HEK293T (cell line): ENCODE measurements at regions of chr10 and their contacts with region 1.

Region 1: GRCh38 chr10:72354478-72355213 is at the start of gene DNAJB12:
- DNase-seq: peak; percentile 94

Region 2: DNA sequence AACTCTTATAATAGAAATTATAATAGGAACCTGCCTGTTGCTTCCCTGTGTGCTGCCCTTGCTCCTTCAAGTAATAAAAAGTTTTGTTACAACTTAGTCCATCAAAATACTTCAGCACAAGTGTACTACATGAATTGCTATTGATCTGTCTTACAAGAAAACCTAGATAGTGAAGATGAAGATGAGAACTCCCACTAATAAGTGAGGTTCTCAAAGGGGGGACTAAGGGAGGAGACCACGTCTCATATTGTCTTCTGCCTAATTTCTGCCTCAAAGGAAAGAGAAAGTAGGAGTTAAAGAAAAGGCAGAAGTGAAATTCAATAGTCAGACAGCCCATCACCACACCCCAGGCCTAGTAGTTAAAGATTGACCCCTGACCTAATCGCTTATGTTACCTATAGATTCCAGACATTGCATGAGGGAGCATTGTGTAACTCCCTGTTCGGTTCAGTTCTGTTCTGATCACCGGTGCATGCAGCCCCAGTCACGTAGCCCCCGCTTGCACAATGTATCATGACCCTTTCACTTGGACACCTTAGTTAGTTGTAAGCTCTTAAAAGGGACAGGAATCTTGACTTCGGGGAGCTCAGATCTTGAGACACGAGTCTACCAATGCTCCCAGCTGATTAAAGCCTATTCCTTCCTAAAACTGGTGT is 408.7 kb before region 1 on chr10:
- CTCF ChIA-PET with region 1: no interaction called
- POLR2A ChIA-PET with region 1: no interaction called
- DNase-seq: no peak

Region 3: GRCh38 chr10:72692057-72692910 is 337.6 kb after region 1 on chr10 and contains the start of gene MCU:
- CTCF ChIA-PET with region 1: no interaction called
- POLR2A ChIA-PET with region 1: interaction called, 10 read pairs
- DNase-seq: peak; percentile 95